Naive thymus-derived CD4-positive, alpha-beta T cell (primary cell): ENCODE measurements at regions of chr7 and their contacts with region 1.

Region 1: GRCh38 chr7:87564289-87564963 is 36.3 kb downstream of the ABCB1 start:
- DNase-seq: peak in 5 of 9 donors; percentile 5 to 21 (median 12)
- ATAC-seq: peak; percentile 65
- H3K4me3 ChIP-seq: no peak overlapping the region
- H3K4me3 Mint-ChIP-seq: peak overlapping the region in 2 of 10 donors; percentile 7 to 40
- H3K27ac ChIP-seq: no peak overlapping the region
- H3K27ac Mint-ChIP-seq: no peak overlapping the region
- H3K4me1 ChIP-seq: no peaks in the 10 kb centered on the region
- H3K4me1 Mint-ChIP-seq: peaks cover 0 to 9% (median 2%) of the 10 kb centered on the region in 7 donors
- H3K27me3 ChIP-seq: no peaks in the 10 kb centered on the region
- H3K27me3 Mint-ChIP-seq: peaks cover 0 to 6% (median 0%) of the 10 kb centered on the region in 5 donors

Region 2: GRCh38 chr7:87231256-87231655 is 333.2 kb before region 1 on chr7:
- CTCF ChIA-PET with region 1: no interaction called
- POLR2A ChIA-PET with region 1: no interaction called
- intact Hi-C with region 1: no loop called
- DNase-seq: no peak
- ATAC-seq: no peak
- H3K4me3 ChIP-seq: no peak overlapping the region
- H3K4me3 Mint-ChIP-seq: no peak overlapping the region
- H3K27ac ChIP-seq: no peak overlapping the region
- H3K27ac Mint-ChIP-seq: no peak overlapping the region
- H3K4me1 ChIP-seq: no peaks in the 10 kb centered on the region
- H3K4me1 Mint-ChIP-seq: peaks cover 0 to 12% (median 4%) of the 10 kb centered on the region in 7 donors
- H3K27me3 ChIP-seq: no peaks in the 10 kb centered on the region
- H3K27me3 Mint-ChIP-seq: peaks cover 0 to 4% (median 0%) of the 10 kb centered on the region in 5 donors

Region 3: DNA sequence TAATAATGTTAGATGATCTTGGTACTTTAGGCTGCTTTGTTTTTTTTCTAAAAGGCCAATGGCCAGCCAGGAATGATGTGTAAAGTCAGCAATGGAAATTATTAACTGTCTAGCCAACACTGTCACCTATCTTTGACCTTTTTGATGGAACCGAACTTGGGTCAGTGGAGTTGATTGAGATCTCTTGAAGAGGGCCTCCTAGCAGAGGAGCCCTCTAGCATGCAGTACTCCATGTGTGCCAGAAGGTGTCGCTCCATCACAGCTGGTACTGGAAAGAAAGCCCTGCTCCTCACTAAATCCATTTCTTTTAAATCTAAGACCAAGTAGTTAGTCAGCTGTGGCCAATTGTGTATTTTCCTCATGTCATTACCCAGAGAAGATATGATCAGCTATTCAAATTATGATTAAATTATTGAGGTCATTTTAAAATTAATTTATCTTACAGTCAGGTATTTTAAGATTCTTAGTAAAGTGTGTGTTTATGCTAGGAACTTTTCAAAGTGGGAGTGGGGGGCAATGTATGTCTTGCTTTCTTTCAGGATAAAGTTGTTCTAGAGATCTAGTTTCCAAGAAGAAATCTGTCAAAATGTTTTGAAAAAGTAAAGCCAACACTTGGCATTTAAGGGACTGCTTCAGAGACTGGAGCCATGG is 252.1 kb before region 1 on chr7:
- CTCF ChIA-PET with region 1: no interaction called
- POLR2A ChIA-PET with region 1: no interaction called
- intact Hi-C with region 1: loop called (anchors 1 to 5 kb)
- DNase-seq: peak; percentile 25 to 70 (median 55)
- ATAC-seq: peak; percentile 98
- H3K4me3 ChIP-seq: no peak overlapping the region
- H3K4me3 Mint-ChIP-seq: no peak overlapping the region
- H3K27ac ChIP-seq: no peak overlapping the region
- H3K27ac Mint-ChIP-seq: no peak overlapping the region
- H3K4me1 ChIP-seq: peaks cover 0 to 4% of the 10 kb centered on the region in 2 donors
- H3K4me1 Mint-ChIP-seq: peaks cover 0 to 3% (median 0%) of the 10 kb centered on the region in 7 donors
- H3K27me3 ChIP-seq: no peaks in the 10 kb centered on the region
- H3K27me3 Mint-ChIP-seq: peaks cover 0 to 12% (median 0%) of the 10 kb centered on the region in 5 donors

Region 4: DNA sequence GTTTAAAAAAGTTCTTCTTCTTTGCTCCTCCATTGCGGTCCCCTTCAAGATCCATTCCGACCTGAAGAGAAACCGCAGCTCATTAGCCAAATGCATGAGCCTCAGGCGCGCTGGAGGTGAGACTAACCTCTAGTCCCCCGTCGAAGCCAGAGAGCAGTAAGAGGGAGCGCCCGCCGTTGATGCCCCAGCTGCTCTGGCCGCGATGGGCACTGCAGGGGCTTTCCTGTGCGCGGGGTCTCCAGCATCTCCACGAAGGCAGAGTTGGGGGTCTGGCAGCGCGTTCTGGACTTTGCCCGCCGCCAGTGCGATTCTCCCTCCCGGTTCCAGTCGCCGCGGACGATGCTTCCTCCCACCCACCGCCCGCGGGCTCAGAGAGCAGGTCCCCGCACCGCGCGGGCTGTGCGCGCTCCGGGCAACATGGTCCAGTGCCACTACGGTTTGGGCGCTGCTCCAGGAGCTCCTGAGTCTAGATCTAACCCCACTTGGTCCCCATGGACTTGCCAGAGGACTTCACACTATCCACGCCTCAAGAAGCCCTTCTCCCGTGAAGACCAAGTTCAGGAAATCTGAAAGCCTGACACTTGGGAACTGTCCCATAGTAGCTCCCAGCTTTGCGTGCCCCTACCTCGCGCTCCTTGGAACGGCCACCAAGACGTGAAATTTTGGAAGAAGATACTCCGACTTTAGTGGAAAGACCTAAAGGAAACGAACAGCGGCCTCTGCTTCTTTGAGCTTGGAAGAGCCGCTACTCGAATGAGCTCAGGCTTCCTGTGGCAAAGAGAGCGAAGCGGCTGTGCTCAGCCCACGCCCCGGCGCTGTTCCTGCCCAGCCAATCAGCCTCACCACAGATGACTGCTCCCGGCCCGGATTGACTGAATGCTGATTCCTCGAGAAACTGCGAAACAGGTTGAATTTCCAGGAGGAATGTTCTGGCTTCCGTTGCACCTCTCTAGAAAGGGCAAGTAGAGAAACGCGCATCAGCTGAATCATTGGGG is 36.0 kb after region 1 on chr7 and contains the start of gene ABCB1:
- CTCF ChIA-PET with region 1: no interaction called
- POLR2A ChIA-PET with region 1: no interaction called
- intact Hi-C with region 1: loop called in 1 of 2 experiments (anchors 2 kb)
- DNase-seq: peak; percentile 19 to 60 (median 49)
- ATAC-seq: peak; percentile 85
- H3K4me3 ChIP-seq: peak within 1 kb of the TSS; percentile 82
- H3K4me3 Mint-ChIP-seq: peak within 1 kb of the TSS; percentile 76 to 95 (median 85)
- H3K27ac ChIP-seq: peak within 1 kb of the TSS; percentile 68
- H3K27ac Mint-ChIP-seq: peak within 1 kb of the TSS; percentile 29 to 89 (median 81)
- H3K4me1 ChIP-seq: peaks cover 3 to 6% of the 10 kb centered on the region in 2 donors
- H3K4me1 Mint-ChIP-seq: peaks cover 13 to 45% (median 28%) of the 10 kb centered on the region in 7 donors
- H3K27me3 ChIP-seq: no peaks in the 10 kb centered on the region
- H3K27me3 Mint-ChIP-seq: peaks cover 0 to 50% (median 45%) of the 10 kb centered on the region in 5 donors
- total RNA-seq, gene ABCB1: 3.0 to 14.3 (median 10.4) TPM